ENCODE measurements at regions of chr3 and their contacts with region 1.

Region 1: GRCh38 chr3:138862924-138863775 is 28.4 kb upstream of the PIK3CB start:
- DNase-seq: peak; percentile 62 to 84 (median 71)
- ATAC-seq: peak; percentile 89
- H3K4me3 ChIP-seq: no peak overlapping the region; the same call in 1 of the 2 replicates
- H3K27ac ChIP-seq: peak overlapping the region; percentile 75
- H3K4me1 ChIP-seq: peaks cover 20 to 31% of the 10 kb centered on the region in 2 experiments; a peak in 4 of 5 replicates
- H3K27me3 ChIP-seq: no peaks in the 10 kb centered on the region
- CTCF ChIP-seq: no peak
- EP300 ChIP-seq: peak; percentile 63; the same call in 1 of the 2 replicates
- POLR2A ChIP-seq: no peak
- RAD21 ChIP-seq: no peak

Region 2: DNA sequence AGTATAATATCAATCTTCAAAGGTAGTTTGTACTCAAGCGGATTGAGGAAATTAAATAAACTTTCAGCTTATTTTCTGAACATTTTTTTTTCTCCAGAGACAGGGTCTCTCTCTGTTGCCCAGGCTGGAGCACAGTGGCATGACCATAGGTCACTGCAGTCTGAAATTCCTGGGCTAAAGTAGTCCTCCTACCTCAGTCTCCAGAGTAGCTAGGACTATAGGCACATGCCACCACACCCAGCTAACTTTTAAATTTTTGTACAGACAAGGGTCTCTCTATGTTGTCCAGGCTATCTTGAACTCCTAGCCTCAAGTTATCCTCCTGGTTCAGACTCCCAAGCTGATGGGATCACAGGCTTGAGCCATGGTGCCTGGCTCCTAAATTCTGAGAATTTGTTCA is 157.5 kb before region 1 on chr3:
- CTCF ChIA-PET with region 1: no interaction called
- POLR2A ChIA-PET with region 1: no interaction called
- in situ Hi-C with region 1: no loop called
- intact Hi-C with region 1: no loop called
- DNase-seq: no peak
- ATAC-seq: peak; percentile 44
- H3K4me3 ChIP-seq: no peak overlapping the region
- H3K27ac ChIP-seq: no peak overlapping the region
- H3K4me1 ChIP-seq: no peaks in the 10 kb centered on the region
- H3K27me3 ChIP-seq: no peaks in the 10 kb centered on the region
- CTCF ChIP-seq: no peak
- EP300 ChIP-seq: no peak
- POLR2A ChIP-seq: no peak
- RAD21 ChIP-seq: no peak

Region 3: GRCh38 chr3:138842483-138843188 is 20.5 kb before region 1 on chr3:
- CTCF ChIA-PET with region 1: no interaction called
- POLR2A ChIA-PET with region 1: interaction called, 10 read pairs
- in situ Hi-C with region 1: no loop called
- intact Hi-C with region 1: no loop called
- DNase-seq: peak in 1 of 4 experiments; percentile 14
- ATAC-seq: no peak; the same call in 1 of the 3 replicates
- H3K4me3 ChIP-seq: no peak overlapping the region
- H3K27ac ChIP-seq: peak overlapping the region; percentile 23; the same call in 2 of the 3 replicates
- H3K4me1 ChIP-seq: peaks cover 0 to 11% of the 10 kb centered on the region in 2 experiments; a peak in 2 of 5 replicates
- H3K27me3 ChIP-seq: no peaks in the 10 kb centered on the region
- CTCF ChIP-seq: no peak
- EP300 ChIP-seq: no peak
- POLR2A ChIP-seq: no peak
- RAD21 ChIP-seq: no peak

Region 4: DNA sequence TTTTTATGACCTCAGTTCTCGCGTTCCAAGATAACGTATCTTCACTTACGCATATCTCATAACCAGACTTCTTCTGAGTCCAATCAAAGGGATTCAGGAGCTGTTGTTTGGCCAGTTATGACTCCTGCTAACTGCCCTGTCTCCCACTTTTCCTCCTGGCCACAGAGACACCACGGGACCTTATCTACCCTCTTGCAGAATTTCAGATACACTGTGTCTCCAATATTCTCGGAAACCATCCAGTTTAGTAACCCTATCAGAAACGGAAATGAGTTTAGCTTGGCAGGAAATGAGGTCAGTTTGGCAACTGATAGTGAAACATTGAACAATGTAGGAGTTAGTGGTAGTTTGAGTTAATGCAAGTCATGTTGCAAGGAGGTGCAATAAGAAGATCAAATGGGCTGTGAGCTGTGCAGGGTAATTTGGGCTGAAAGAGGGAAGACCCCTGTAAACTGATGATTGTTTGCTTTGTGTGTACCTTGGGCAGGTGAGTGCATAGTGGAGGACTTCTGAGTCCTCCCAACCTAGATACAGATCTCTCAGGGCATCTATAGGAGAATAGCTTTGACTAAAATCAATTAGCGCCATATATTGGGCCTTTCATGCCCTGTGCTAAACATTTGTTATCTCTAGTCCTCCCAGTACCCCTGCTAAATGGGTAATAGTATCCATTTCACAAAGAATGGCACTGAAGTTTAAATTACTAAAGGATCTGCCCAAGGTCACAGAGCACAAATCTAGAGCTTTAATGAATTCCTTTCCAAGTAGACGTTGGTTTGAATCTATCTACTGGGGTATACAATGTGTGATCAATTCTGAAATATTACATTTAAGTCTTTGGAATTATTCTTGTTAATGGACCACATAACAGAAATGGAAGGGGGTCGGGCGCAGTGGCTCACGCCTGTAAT is 12.9 kb after region 1 on chr3:
- CTCF ChIA-PET with region 1: no interaction called
- POLR2A ChIA-PET with region 1: interaction called, 17 read pairs
- in situ Hi-C with region 1: no loop called
- intact Hi-C with region 1: loop called (anchors 1 kb)
- DNase-seq: peak; percentile 91 to 98 (median 93)
- ATAC-seq: peak; percentile 94
- H3K4me3 ChIP-seq: peak overlapping the region; percentile 10
- H3K27ac ChIP-seq: peak overlapping the region; percentile 98
- H3K4me1 ChIP-seq: peaks cover 5 to 29% of the 10 kb centered on the region in 2 experiments; a peak in 3 of 5 replicates
- H3K27me3 ChIP-seq: no peaks in the 10 kb centered on the region
- CTCF ChIP-seq: no peak
- EP300 ChIP-seq: peak; percentile 99
- POLR2A ChIP-seq: peak; percentile 76
- RAD21 ChIP-seq: peak; percentile 33 to 40; a peak in 3 of 4 replicates

Measured in K562 (cell line).